ENCODE measurements at regions of chr6 and their contacts with region 1.

Region 1: GRCh38 chr6:156564127-156564806 is 212.9 kb upstream of the ARID1B start:
- DNase-seq: peak; percentile 65 to 67
- ATAC-seq: peak; percentile 90 to 98
- H3K4me3 ChIP-seq: no peak overlapping the region
- H3K27ac ChIP-seq: no peak overlapping the region
- H3K4me1 ChIP-seq: peaks cover 3 to 10% of the 10 kb centered on the region in 2 donors
- H3K27me3 ChIP-seq: no peaks in the 10 kb centered on the region
- CTCF ChIP-seq: peak; percentile 89 to 97 (median 90)
- POLR2A ChIP-seq: no peak

Region 2: GRCh38 chr6:156437121-156437879 is 127.0 kb before region 1 on chr6:
- in situ Hi-C with region 1: no loop called
- intact Hi-C with region 1: no loop called
- DNase-seq: no peak
- ATAC-seq: no peak
- H3K4me3 ChIP-seq: no peak overlapping the region
- H3K27ac ChIP-seq: no peak overlapping the region
- H3K4me1 ChIP-seq: no peaks in the 10 kb centered on the region
- H3K27me3 ChIP-seq: no peaks in the 10 kb centered on the region
- CTCF ChIP-seq: no peak
- POLR2A ChIP-seq: no peak

Region 3: DNA sequence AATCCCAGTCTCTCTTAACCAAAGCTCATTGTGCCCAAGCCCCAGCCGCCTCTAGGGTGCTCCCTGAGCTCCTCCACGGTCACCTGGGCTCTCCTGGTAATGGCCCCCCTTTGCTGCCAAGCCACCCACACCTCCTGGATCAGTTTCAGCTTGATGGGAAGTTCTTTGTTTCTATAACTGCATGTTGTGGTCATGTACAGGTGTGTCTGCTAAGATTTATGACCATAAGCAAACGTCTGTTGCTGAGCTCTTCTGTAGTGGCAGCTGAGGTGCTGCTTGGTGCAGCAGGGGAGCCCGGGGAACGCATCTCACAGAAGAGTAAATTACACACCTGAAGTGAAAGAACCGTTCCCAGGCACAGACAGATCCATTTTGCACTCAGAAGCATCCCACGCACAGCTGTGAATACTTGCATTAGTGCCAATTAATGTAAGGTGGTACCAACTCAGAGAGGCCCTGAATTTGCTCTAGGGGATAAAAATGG is 18.3 kb after region 1 on chr6:
- in situ Hi-C with region 1: no loop called
- intact Hi-C with region 1: no loop called
- DNase-seq: no peak
- ATAC-seq: no peak
- H3K4me3 ChIP-seq: no peak overlapping the region
- H3K27ac ChIP-seq: no peak overlapping the region
- H3K4me1 ChIP-seq: no peaks in the 10 kb centered on the region
- H3K27me3 ChIP-seq: no peaks in the 10 kb centered on the region
- CTCF ChIP-seq: no peak
- POLR2A ChIP-seq: no peak

Region 4: DNA sequence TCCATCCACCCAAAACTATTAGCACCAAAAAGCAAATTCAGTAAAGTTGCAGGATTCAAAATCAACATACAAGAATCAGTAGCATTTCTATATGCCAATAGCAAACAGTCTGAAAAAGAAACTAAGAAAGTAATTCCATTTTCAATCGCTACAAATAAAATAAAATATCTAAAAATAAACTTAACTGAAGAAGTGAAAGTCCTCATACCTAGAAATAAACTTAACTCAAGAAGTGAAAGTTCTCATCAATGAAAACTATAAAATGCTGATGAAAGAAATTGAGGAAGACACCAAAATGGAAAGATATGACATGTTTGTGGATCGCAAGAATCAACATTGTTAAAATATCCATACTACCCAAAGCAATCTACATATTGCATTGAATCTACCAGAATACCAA is 109.9 kb after region 1 on chr6:
- in situ Hi-C with region 1: no loop called
- intact Hi-C with region 1: no loop called
- DNase-seq: no peak
- ATAC-seq: no peak
- H3K4me3 ChIP-seq: no peak overlapping the region
- H3K27ac ChIP-seq: no peak overlapping the region
- H3K4me1 ChIP-seq: no peaks in the 10 kb centered on the region
- H3K27me3 ChIP-seq: peaks cover 0 to 3% (median 0%) of the 10 kb centered on the region in 3 donors
- CTCF ChIP-seq: no peak
- POLR2A ChIP-seq: no peak

Region 5: GRCh38 chr6:156686995-156687788 is 122.9 kb after region 1 on chr6:
- in situ Hi-C with region 1: loop called in 2 of 4 experiments (anchors 10 kb)
- intact Hi-C with region 1: loop called (anchors 5 kb)
- DNase-seq: peak; percentile 84 to 90
- ATAC-seq: peak; percentile 81 to 84
- H3K4me3 ChIP-seq: peak overlapping the region; percentile 71 to 91 (median 86)
- H3K27ac ChIP-seq: peak overlapping the region; percentile 96 to 99 (median 99)
- H3K4me1 ChIP-seq: peaks cover 7 to 13% of the 10 kb centered on the region in 2 donors
- H3K27me3 ChIP-seq: no peaks in the 10 kb centered on the region
- CTCF ChIP-seq: peak in 1 of 5 experiments; percentile 10
- POLR2A ChIP-seq: peak; percentile 75 to 85

Region 6: DNA sequence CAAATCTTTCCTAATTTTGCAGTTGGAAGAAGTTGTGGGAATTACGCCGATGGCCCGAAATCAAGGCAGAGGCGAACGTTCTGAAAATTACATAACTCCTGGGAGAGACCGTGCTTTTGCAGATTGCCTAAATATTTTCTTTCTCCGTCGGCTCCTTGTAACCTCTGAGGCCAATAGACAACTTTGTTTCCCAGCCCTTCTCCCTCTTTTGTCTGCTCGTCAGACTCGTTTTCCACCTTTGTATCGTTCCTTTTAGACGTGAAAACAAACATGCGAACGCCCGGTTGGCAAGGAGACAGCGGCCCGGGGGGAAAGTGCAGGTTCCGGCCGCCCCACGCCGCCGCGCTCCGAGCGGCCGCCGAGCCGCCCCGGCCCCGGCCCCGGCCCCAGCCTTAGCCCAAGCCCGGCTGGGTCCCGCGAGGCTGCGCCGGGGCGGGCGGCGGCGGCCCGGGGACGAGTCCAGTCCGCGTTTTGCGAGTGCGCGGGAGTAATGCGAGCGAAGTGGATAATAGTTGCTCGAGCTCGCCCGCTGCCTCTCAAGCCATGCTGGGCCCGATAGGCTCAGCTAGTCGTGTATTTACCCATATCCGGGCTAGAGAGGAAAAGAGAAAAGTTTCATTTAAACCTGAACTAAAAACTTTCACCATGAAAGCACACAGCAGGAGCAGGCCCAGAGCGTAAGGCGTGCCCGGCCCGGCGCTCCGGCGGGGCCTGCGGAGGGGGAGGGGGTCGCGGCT is 212.7 kb after region 1 on chr6 and contains the start of gene ARID1B:
- in situ Hi-C with region 1: loop called in 2 of 4 experiments (anchors 25 kb)
- intact Hi-C with region 1: loop called (anchors 2 kb)
- DNase-seq: peak; percentile 74 to 84
- ATAC-seq: peak; percentile 45 to 55
- H3K4me3 ChIP-seq: peak within 1 kb of the TSS; percentile 76 to 89 (median 81)
- H3K27ac ChIP-seq: peak within 1 kb of the TSS; percentile 96 to 98 (median 98)
- H3K4me1 ChIP-seq: peaks cover 31 to 38% of the 10 kb centered on the region in 2 donors
- H3K27me3 ChIP-seq: no peaks in the 10 kb centered on the region
- CTCF ChIP-seq: no peak
- POLR2A ChIP-seq: peak; percentile 65 to 69
- total RNA-seq, gene ARID1B: 54.9 to 75.3 (median 62.0) TPM

Region 7: GRCh38 chr6:156852132-156852857 is 288.0 kb after region 1 on chr6:
- in situ Hi-C with region 1: no loop called
- intact Hi-C with region 1: no loop called
- DNase-seq: peak in 1 of 2 donors; percentile 43
- ATAC-seq: peak; percentile 31 to 39
- H3K4me3 ChIP-seq: no peak overlapping the region
- H3K27ac ChIP-seq: peak overlapping the region; percentile 79 to 87 (median 84)
- H3K4me1 ChIP-seq: peaks cover 80 to 94% of the 10 kb centered on the region in 2 donors
- H3K27me3 ChIP-seq: no peaks in the 10 kb centered on the region
- CTCF ChIP-seq: no peak
- POLR2A ChIP-seq: no peak

Region 8: DNA sequence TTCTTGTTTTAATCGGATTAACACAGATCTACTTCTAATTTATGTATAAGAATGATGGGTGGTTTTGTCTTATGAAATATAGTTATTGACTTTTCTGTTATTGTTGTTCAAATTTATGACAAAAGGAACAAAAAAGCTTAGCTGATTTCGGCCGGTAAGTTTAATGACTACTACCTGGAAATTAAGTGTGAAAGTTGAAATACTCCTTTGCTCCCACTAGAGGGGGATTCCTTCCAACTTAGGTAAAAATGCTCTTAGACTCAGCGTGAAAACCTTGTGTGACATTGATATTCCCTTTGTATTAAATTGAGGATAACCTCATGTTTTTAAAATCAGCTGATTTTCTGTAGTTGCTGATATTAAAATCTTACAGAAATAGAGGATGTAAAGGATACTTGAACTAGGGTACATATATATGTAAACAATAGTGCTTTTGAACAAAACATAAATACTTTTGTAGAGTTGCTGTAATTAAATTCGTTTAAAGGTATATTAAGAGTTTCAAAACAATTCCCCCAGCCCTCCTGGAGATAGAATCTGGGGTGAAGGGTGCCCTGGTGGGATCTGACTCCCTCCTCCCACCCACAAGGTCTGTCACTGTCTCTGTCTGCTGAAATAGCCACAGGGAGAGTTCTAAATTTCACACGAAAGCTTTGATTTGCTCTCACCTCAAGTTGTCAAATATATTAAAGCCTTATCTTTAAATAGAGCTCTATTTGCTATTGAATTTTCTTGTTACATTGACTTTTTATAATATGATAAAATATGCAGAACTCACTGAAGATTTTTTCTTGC is 470.4 kb after region 1 on chr6:
- in situ Hi-C with region 1: loop called in 2 of 4 experiments (anchors 25 kb)
- intact Hi-C with region 1: no loop called
- DNase-seq: no peak
- ATAC-seq: peak in 1 of 2 donors; percentile 42
- H3K4me3 ChIP-seq: no peak overlapping the region
- H3K27ac ChIP-seq: peak overlapping the region in 2 of 4 donors; percentile 4 to 8
- H3K4me1 ChIP-seq: peaks cover 41 to 45% of the 10 kb centered on the region in 2 donors
- H3K27me3 ChIP-seq: no peaks in the 10 kb centered on the region
- CTCF ChIP-seq: peak; percentile 22 to 55 (median 53)
- POLR2A ChIP-seq: no peak

Region 9: GRCh38 chr6:157045831-157046454 is 481.7 kb after region 1 on chr6:
- in situ Hi-C with region 1: loop called in 3 of 4 experiments (anchors 5 to 25 kb)
- intact Hi-C with region 1: loop called (anchors 1 kb)
- DNase-seq: no peak
- ATAC-seq: peak; percentile 43 to 57
- H3K4me3 ChIP-seq: no peak overlapping the region
- H3K27ac ChIP-seq: no peak overlapping the region
- H3K4me1 ChIP-seq: peaks cover 34 to 39% of the 10 kb centered on the region in 2 donors
- H3K27me3 ChIP-seq: no peaks in the 10 kb centered on the region
- CTCF ChIP-seq: peak; percentile 17 to 63 (median 57)
- POLR2A ChIP-seq: no peak

Region 10: GRCh38 chr6:157274471-157275226 is 710.4 kb after region 1 on chr6:
- in situ Hi-C with region 1: loop called in 1 of 4 experiments (anchors 25 kb)
- intact Hi-C with region 1: loop called (anchors 5 kb)
- DNase-seq: peak; percentile 38 to 55
- ATAC-seq: peak; percentile 96
- H3K4me3 ChIP-seq: peak overlapping the region; percentile 58 to 89 (median 68)
- H3K27ac ChIP-seq: peak overlapping the region; percentile 59 to 77 (median 69)
- H3K4me1 ChIP-seq: peaks cover 3 to 7% of the 10 kb centered on the region in 2 donors
- H3K27me3 ChIP-seq: no peaks in the 10 kb centered on the region
- CTCF ChIP-seq: peak; percentile 23 to 99 (median 95)
- POLR2A ChIP-seq: peak in 1 of 2 donors; percentile 18

Measured in gastrocnemius medialis (tissue), 4 donors.